Testis (tissue), 5 donors: ENCODE measurements at regions of chr1 and their contacts with region 1.

Region 1: GRCh38 chr1:28518000-28518744 is 12.3 kb downstream of the RCC1 start:
- DNase-seq: peak; percentile 93
- H3K4me3 ChIP-seq: peak overlapping the region; percentile 70 to 76
- H3K27ac ChIP-seq: peak overlapping the region; percentile 56 to 78
- H3K4me1 ChIP-seq: peaks cover 11% of the 10 kb centered on the region
- H3K27me3 ChIP-seq: no peaks in the 10 kb centered on the region
- CTCF ChIP-seq: peak; percentile 97 to 99 (median 98)
- POLR2A ChIP-seq: no peak

Region 2: GRCh38 chr1:28392027-28392652 is 126.0 kb before region 1 on chr1:
- intact Hi-C with region 1: no loop called
- DNase-seq: no peak
- H3K4me3 ChIP-seq: no peak overlapping the region
- H3K27ac ChIP-seq: no peak overlapping the region
- H3K4me1 ChIP-seq: no peaks in the 10 kb centered on the region
- H3K27me3 ChIP-seq: no peaks in the 10 kb centered on the region
- CTCF ChIP-seq: no peak
- POLR2A ChIP-seq: no peak

Region 3: DNA sequence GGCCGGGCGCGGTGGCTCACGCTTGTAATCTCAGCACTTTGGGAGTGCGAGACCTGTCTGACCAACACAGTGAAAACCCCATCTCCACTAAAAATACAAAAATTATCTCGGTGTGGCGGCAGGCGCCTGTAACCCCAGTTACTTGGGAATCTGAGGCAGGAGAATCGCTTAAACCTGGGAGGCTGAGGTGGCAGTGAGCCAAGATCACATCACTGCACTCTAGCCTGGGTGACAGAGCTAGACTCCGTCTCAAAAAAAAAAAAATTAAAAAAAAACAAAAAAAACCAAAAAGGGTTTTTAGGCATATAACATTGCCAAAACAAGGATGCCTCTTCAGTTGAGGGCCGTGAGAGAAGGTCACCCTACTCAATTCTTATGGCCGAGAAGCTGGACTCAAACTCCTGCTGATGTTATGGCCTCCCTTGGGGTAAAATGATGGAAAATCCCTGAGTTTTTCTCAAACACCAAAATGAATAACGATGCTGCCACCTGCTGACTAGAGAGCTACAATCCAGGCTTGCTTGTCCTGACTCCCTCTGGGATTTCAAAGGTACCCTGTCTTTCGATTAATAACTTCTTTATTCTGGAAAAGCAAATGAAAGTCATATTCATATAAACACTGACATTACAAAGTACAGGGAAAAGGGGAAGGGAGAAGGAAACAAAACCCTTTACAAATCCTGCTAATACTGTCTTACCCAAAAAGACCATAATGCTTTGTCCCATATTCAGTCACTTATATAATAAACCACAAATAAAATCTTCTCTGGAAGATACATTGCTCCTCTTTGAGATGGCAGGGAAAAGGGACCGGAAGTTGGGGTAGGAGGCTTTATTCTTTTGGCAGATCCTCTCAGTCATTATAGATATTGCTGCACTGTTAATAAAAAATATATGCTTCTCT is 84.6 kb after region 1 on chr1:
- intact Hi-C with region 1: loop called (anchors 5 kb)
- DNase-seq: peak; percentile 82
- H3K4me3 ChIP-seq: no peak overlapping the region
- H3K27ac ChIP-seq: no peak overlapping the region
- H3K4me1 ChIP-seq: no peaks in the 10 kb centered on the region
- H3K27me3 ChIP-seq: no peaks in the 10 kb centered on the region
- CTCF ChIP-seq: peak; percentile 41 to 59 (median 52)
- POLR2A ChIP-seq: no peak